ENCODE measurements at regions of chr17 and their contacts with region 1.

Region 1: DNA sequence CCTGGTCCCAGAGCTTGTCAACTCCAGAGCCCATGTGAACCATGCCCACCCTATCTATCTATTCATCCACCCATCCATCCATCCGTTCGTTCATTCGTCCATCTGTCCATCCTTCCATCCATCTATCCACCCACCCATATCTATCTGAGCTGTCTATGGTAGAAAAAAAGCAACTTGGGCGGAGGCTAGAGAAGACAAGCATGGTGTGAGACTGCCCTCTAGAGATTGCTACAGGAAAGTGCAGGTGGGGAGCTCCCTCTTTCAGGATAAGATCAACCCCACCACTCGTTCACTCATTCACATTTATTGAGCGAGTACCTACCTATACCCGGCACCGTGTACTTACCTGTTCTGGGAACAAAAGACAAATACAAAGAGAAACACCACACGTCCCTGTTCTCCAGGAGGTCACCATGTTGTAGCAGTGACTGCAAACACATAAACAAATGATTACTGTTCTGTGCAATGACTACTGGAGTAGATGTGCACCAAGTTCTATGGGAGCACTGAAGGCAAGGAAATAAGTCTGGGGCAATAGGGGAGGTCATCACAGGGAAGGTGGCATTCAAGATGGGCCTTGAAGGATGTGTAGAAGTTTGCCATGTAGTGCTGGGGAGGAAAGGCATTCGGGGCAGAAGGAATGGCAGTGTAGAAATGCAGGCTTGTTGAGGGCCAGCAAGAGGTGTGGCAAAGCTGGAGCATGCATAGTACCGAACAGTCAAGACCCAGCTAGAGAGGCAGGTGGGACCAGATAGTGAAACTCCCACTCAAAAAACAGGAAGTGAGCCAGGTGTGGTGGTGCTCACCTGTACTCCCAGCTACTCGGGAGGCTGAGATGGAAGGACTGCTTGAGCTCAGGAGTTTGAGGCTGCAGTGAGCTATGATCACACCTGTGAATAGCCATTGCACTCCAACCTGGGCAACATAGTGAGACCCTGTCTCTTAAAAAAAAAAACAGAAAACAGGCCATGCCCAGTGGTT is 13.4 kb upstream of the ATP5MC1 start:
- DNase-seq: peak; percentile 53
- H3K4me3 Mint-ChIP-seq: no peak overlapping the region
- H3K27ac Mint-ChIP-seq: no peak overlapping the region
- H3K4me1 Mint-ChIP-seq: peaks cover 10% of the 10 kb centered on the region
- H3K27me3 Mint-ChIP-seq: no peaks in the 10 kb centered on the region

Region 2: DNA sequence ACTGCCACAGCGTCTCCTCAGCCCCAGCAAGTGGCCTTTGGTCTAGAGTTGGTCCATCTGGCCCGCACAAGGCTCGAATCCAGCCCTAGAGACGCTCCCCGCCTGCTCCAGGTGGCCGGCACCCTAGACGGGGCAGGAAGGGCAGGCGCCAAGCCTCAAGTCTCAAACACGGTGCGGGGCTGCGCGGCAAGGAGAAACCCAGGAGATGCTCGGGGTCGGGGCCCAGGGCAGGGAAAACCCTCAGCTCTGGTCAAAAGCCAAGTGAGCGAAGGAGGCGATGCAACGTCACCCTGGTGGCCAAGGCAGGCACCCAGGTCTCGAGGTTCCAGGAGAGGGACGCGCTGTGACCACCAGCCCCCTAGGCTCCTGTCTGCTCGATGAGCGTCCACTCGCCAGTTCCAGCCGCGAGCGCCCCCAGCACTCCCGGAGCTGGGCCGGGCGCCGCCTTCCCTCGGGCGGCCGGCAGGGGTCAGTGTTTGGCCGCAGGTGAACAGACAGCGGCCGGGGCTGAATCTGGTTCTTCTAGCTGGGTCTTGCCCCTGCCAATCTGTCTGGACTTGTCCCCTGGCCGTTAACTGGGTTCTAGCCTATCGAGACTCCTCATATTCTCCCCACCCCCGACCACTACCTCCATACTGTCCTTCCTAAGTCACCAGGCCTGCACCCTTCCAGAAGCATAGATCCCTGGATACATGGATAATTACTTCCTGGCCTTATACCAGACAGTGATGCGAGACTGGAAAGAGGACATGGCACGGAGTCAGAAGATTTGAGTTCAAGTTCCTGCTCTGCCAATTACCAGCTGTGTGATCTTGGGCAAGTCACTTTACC is 200.9 kb before region 1 on chr17:
- intact Hi-C with region 1: loop called (anchors 1 kb)
- DNase-seq: peak; percentile 60
- H3K4me3 Mint-ChIP-seq: no peak overlapping the region
- H3K27ac Mint-ChIP-seq: no peak overlapping the region
- H3K4me1 Mint-ChIP-seq: no peaks in the 10 kb centered on the region
- H3K27me3 Mint-ChIP-seq: peaks cover 53% of the 10 kb centered on the region

Region 3: DNA sequence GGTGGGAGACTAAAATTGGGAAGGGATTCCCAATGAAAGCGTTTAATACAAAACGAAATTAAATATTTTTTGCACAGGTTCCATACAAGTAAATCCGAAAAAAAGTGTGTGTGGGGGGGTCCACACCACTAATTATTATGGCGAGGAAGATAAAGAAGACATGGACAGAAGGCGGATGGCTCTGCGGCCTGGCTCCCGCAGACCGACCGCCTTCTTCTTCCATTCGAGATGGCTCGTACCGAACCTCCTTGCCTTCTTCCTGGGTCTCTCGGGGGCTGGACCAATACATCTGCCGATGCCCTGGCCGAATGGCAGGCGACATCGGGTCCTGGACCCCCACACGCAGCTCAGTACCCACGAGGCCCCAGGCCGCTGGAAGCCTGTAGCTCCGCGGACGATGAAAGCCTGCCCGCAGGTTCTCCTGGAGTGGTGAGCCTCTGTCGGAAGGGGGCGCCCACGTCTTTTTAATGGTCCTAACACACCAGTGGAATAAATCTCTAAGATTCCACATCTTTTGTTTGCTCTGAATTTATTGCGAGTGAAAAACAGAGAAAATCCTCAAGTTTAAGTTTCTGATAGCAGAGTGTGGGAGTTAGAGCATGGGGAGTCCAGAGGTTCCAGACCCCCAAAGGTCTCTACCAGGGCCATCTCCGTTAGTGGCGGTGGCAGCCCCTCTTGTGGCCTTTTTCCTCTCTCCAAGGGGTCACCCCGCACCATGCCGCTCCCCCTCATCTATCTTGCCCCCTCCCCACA is 154.8 kb before region 1 on chr17:
- intact Hi-C with region 1: loop called (anchors 1 kb)
- DNase-seq: peak; percentile 55
- H3K4me3 Mint-ChIP-seq: peak overlapping the region; percentile 47
- H3K27ac Mint-ChIP-seq: peak overlapping the region; percentile 75
- H3K4me1 Mint-ChIP-seq: peaks cover 14% of the 10 kb centered on the region
- H3K27me3 Mint-ChIP-seq: peaks cover 92% of the 10 kb centered on the region

Region 4: GRCh38 chr17:48804925-48805411 is 74.2 kb before region 1 on chr17:
- intact Hi-C with region 1: loop called (anchors 1 kb)
- DNase-seq: peak; percentile 54
- H3K4me3 Mint-ChIP-seq: no peak overlapping the region
- H3K27ac Mint-ChIP-seq: no peak overlapping the region
- H3K4me1 Mint-ChIP-seq: no peaks in the 10 kb centered on the region
- H3K27me3 Mint-ChIP-seq: peaks cover 27% of the 10 kb centered on the region

Region 5: GRCh38 chr17:48816774-48817590 is 62.2 kb before region 1 on chr17 and contains the start of gene TTLL6:
- intact Hi-C with region 1: loop called (anchors 1 kb)
- DNase-seq: peak; percentile 81
- H3K4me3 Mint-ChIP-seq: peak within 1 kb of the TSS; percentile 81
- H3K27ac Mint-ChIP-seq: no peak within 1 kb of the TSS
- H3K4me1 Mint-ChIP-seq: peaks cover 18% of the 10 kb centered on the region
- H3K27me3 Mint-ChIP-seq: peaks cover 65% of the 10 kb centered on the region
- total RNA-seq, gene TTLL6: not detected in 2 replicates

Region 6: DNA sequence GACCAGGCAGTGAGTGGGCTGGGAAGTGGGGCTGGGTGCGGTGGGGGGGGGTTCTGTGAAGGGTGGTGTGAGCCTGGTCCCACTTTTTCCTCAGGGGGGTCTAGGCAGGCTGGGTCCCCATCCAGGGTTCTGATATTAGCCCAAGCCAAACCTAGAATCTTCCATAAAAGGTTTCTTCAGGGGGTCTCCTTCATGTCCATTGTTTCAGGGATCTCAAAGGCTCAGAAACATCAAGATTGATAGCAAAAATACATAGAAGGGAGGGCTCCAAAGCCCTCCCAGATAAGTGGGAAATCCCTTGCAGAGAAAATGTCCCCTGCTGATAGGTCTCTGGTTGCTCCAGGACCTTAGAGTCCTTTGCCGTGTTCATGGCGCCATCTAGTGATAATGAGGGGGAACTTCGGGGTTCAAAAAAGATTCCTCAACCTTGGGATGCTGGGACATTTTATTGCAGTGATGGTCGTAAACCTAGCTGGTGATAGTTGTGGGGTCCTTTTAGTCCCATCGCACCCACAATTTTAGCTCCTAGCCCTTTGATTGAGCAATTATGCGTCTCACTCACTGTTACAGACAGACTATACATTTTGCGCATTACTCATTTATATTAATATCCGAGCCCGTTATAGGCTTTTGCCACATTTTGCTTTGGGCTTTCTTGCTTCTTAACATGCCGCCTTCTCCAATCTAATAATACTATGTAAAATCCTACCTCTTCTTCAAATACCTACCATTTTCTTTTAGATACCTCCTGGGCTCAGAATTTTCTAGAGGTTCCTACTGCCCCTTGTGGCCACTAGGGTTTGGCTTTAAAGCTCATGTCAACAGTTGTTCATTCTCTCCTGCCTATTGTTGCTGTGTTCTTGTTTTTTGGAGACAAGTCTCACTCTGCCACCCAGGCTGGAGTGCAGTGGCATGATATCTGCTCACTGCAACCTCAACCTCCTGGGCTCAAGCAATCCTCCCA is 153.0 kb after region 1 on chr17:
- intact Hi-C with region 1: loop called (anchors 1 kb)
- DNase-seq: peak; percentile 30
- H3K4me3 Mint-ChIP-seq: no peak overlapping the region
- H3K27ac Mint-ChIP-seq: no peak overlapping the region
- H3K4me1 Mint-ChIP-seq: no peaks in the 10 kb centered on the region
- H3K27me3 Mint-ChIP-seq: peaks cover 5% of the 10 kb centered on the region

Measured in activated T-helper 1 cell treated with anti-CD3 and anti-CD28 coated beads, Interleukin-12 subunit alpha, Interleukin-12 subunit beta, Interleukin-2, Interleukin-4 antibody, amounts not matched to agents 30 ng/mL and 10 ng/mL and 1 ng/mL, durations not matched to agents 14 hours and 24 hours and 36 hours (primary cell).